Activated CD4-positive, alpha-beta T cell treated with anti-CD3 and anti-CD28 coated beads, Interleukin-2, amount 10 ng/mL, durations not matched to agents 24 days and 14 days (primary cell): ENCODE measurements at regions of chr14 and their contacts with region 1.

Region 1: GRCh38 chr14:71355324-71356201 is 448.3 kb downstream of the PCNX1 start:
- DNase-seq: no peak
- H3K4me3 Mint-ChIP-seq: no peak overlapping the region
- H3K27ac Mint-ChIP-seq: no peak overlapping the region
- H3K4me1 Mint-ChIP-seq: peaks cover 31% of the 10 kb centered on the region
- H3K27me3 Mint-ChIP-seq: no peaks in the 10 kb centered on the region

Region 2: DNA sequence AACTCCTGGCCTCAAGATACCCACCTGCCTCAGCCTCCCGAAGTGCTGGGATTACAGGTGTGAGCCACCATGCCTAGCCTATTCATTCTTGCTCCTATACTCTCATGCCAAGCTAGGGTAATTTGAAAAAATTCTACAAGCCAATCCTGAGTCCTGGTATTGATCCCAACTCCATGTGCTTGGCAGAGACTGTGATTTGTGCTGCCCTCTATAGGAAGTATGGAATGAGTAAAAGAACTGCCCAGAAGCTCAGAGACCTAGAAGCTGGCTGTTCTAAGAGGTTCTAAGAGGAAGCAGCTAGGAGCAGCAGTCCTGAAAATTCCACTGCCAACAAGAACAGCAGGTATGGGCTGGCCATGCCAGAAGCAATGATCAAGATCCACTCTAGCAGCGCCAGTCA is 45.8 kb before region 1 on chr14:
- intact Hi-C with region 1: no loop called
- DNase-seq: no peak
- H3K4me3 Mint-ChIP-seq: no peak overlapping the region
- H3K27ac Mint-ChIP-seq: no peak overlapping the region
- H3K4me1 Mint-ChIP-seq: no peaks in the 10 kb centered on the region
- H3K27me3 Mint-ChIP-seq: peaks cover 12% of the 10 kb centered on the region

Region 3: GRCh38 chr14:71403656-71404055 is 48.1 kb after region 1 on chr14:
- intact Hi-C with region 1: loop called (anchors 5 kb)
- DNase-seq: peak; percentile 81
- H3K4me3 Mint-ChIP-seq: no peak overlapping the region
- H3K27ac Mint-ChIP-seq: peak overlapping the region; percentile 36
- H3K4me1 Mint-ChIP-seq: peaks cover 40% of the 10 kb centered on the region
- H3K27me3 Mint-ChIP-seq: no peaks in the 10 kb centered on the region